ENCODE measurements at regions of chr3 and their contacts with region 1.

Region 1: GRCh38 chr3:172750368-172751174 is at the start of gene ECT2:
- DNase-seq: peak; percentile 98 to 99
- ATAC-seq: peak; percentile 98 to 100
- H3K4me3 ChIP-seq: peak within 1 kb of the TSS; percentile 69 to 82 (median 77)
- H3K27ac ChIP-seq: peak within 1 kb of the TSS; percentile 68 to 73 (median 69)
- H3K4me1 ChIP-seq: peaks cover 0 to 8% of the 10 kb centered on the region in 2 donors
- H3K27me3 ChIP-seq: no peaks in the 10 kb centered on the region
- CTCF ChIP-seq: peak; percentile 70 to 77 (median 74)
- POLR2A ChIP-seq: peak in 1 of 2 donors; percentile 23
- total RNA-seq, gene ECT2: 2.7 to 5.8 (median 3.7) TPM

Region 2: DNA sequence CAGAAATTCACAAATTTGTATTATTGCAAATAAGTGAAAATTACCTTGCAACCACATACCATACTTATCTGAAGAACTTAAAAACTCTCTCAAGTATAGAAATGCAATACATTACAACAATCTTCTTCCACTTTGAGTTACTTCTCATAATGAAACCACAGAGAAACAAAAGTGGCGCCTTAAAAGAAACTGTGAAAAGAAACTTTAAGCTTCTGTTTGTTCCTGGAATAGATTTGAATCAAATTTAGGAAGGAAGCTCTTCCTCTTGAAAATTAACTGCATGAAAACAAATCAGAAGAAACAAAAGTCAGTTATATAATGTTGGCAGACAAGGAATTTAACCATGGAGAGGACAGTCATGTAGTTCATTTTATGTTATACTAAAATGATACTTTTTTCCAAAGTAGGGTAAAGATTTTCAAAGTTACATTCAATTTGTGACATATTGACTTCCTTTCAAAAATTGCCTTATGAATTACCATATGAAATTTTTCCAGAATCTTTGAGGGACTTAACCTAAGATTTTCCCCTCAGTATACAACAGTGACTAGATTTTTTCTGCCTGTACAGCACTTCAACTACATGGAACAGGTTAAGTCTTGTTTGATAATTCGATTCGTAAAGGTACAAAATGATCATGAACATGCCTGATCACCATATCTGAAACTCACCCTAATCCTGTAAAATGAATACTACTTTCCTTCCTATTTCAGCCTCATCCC is 169.7 kb before region 1 on chr3:
- in situ Hi-C with region 1: no loop called
- intact Hi-C with region 1: no loop called
- DNase-seq: no peak
- ATAC-seq: peak in 1 of 2 donors; percentile 24
- H3K4me3 ChIP-seq: no peak overlapping the region
- H3K27ac ChIP-seq: peak overlapping the region in 3 of 4 donors; percentile 18 to 68 (median 52)
- H3K4me1 ChIP-seq: peaks cover 0 to 18% of the 10 kb centered on the region in 2 donors
- H3K27me3 ChIP-seq: no peaks in the 10 kb centered on the region
- CTCF ChIP-seq: no peak
- POLR2A ChIP-seq: no peak

Region 3: DNA sequence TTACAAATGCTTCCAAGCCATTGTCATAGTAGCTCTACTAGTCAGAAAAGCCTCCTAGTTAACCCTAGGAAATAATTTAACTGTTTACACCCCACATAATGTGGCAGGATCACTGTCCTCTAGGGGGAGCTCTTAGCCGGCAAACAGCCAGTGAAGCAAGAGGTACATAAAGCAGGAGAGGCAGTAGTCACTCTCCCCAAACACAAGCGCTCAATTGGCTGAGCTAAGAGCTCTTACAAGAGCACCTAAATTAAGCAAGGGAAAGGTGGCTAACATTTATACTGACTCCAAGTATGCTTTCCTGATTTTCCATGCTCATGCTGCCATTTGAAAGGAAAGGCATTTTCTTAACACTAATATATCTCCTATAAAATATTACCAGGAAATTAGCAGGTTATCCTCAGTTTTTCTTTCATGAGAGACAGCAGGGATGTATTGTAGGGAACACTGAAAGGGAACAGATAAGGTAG is 77.3 kb before region 1 on chr3:
- in situ Hi-C with region 1: no loop called
- intact Hi-C with region 1: loop called (anchors 1 kb)
- DNase-seq: peak; percentile 9 to 62
- ATAC-seq: peak; percentile 61 to 69
- H3K4me3 ChIP-seq: no peak overlapping the region
- H3K27ac ChIP-seq: peak overlapping the region in 3 of 4 donors; percentile 21 to 57 (median 36)
- H3K4me1 ChIP-seq: peaks cover 19% of the 10 kb centered on the region in 2 donors
- H3K27me3 ChIP-seq: no peaks in the 10 kb centered on the region
- CTCF ChIP-seq: peak; percentile 59 to 74 (median 73)
- POLR2A ChIP-seq: no peak

Region 4: DNA sequence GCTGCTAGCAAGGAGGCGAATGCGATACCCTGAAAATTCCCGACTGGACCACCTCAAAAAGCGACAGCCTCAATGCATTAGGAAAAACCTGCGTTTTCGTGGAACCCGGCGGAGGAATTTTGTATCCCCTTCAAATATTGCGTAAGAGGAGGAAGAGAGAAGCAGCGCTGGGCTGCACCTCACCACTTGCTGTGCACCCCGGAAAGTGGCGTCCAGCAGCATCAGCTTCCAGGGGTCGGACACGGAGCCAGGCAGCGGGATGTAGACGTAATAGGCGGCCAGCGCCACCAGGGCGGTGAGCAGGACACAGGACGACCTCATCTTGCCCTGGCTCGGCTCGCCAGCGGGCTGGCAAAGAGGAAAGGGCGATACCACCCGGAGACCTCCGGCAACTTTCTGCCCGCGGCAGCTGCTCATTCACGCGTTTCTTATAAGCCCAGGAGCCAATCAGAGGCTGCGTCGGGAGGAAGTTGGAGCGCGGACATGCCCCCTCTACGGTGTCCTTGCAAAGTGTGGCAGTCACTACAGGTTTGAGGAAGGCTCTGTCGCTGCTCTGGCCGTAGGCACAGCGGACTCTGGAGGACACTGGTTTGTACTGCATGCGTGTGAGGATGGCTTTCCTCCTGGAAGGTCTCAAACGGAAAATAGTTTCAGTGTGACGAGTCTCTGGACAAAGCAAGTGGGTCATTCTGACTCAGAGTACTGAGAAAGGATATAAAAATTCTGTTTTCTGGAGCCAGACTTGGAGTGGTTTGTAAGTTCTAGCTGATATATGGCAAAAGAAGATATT is 39.7 kb before region 1 on chr3 and contains the start of gene NCEH1:
- in situ Hi-C with region 1: no loop called
- intact Hi-C with region 1: loop called (anchors 1 kb)
- DNase-seq: peak; percentile 89 to 93
- ATAC-seq: peak; percentile 97 to 98
- H3K4me3 ChIP-seq: peak within 1 kb of the TSS; percentile 76 to 89 (median 81)
- H3K27ac ChIP-seq: peak within 1 kb of the TSS; percentile 84 to 90 (median 86)
- H3K4me1 ChIP-seq: peaks cover 19 to 26% of the 10 kb centered on the region in 2 donors
- H3K27me3 ChIP-seq: no peaks in the 10 kb centered on the region
- CTCF ChIP-seq: peak; percentile 75 to 95 (median 86)
- POLR2A ChIP-seq: peak; percentile 75 to 86
- total RNA-seq, gene NCEH1: 7.0 to 19.8 (median 8.2) TPM

Region 5: GRCh38 chr3:173078525-173078924 is 328.0 kb after region 1 on chr3:
- in situ Hi-C with region 1: no loop called
- intact Hi-C with region 1: no loop called
- DNase-seq: no peak
- ATAC-seq: no peak
- H3K4me3 ChIP-seq: no peak overlapping the region
- H3K27ac ChIP-seq: no peak overlapping the region
- H3K4me1 ChIP-seq: no peaks in the 10 kb centered on the region
- H3K27me3 ChIP-seq: no peaks in the 10 kb centered on the region
- CTCF ChIP-seq: no peak
- POLR2A ChIP-seq: no peak